Right cardiac atrium (tissue), 5 donors: ENCODE measurements at regions of chr15 and their contacts with region 1.

Region 1: DNA sequence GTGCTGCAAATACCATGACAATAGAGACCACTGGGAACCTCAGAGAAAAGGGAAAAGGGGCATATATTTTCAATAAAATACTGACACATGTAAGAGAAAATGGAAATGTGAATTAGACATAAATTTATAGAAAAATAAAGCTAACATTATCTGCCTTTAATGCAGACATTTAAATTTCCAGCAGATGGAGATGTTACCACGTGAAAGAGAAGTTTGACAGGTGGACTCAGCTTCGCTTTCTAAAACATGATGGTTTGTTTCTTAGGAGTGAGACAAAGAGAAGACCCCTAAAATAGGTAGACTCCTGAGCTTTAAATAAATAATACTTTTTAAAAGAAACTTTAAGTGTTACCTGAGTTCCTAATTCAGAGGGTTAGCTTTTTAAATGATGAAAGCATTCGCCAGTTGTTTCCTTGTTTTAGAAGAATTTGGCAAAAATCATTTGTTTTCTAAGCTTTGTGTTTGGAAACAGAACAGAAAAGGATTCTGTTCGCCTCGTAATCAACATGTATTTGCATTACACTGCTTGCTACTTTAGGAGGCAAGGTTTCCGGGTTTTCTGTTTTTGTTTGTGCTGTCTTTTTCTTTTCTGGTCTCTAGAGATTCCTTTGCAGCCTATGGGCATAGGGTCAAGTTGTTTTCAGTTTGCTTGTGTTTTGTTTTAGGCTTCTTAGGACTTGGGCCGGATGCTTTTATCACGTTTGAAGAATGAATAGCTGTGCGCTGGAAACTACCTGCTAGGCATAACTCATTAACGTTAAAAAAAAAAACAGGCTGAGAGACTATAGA is 271.4 kb downstream of the THSD4 start:
- DNase-seq: no peak
- ATAC-seq: no peak
- H3K4me3 ChIP-seq: no peak overlapping the region
- H3K27ac ChIP-seq: no peak overlapping the region
- H3K4me1 ChIP-seq: no peaks in the 10 kb centered on the region
- H3K27me3 ChIP-seq: no peaks in the 10 kb centered on the region

Region 2: DNA sequence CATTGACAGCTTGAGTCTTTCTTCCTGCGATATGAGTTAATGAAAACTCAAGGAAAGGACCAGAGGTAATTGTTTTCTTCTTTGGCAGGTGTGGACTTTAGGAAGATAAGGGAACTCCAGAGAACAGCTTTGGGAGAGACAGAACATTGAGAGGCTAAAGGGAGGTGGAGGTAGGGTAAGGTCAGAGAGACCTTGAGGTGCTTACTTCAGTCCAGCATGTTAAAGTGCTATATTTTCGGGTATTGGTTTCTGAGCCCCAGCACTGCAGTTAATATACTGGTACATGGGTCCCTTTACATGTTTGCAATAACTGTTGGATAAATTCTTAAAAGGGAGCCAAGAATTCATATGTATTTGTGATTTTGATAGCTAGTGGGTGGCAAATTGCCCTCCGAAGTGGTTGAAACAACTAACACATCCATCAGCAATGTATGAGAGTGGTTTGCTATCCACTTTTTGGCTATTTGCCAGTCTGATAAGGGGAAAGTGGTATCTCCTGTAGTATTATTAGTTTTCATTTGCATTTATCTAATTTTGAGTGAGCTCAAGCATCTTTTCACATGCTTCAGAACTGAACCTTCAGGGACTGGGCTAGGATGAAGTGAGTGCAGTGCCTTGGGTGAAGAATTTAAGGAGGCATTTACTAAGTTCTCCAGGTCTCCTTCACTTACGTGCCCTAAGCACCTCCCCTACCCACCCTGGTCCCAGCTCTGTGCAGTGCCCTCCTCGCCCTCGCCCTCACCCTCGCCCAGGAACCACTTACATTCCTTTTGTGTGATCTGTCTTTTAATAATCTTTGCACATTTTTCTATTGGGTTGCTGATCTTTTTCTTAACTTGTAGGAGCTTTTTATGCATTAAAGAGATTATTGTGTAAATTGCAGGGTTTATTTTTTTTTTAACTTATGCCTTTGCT is 51.0 kb after region 1 on chr15:
- intact Hi-C with region 1: loop called in 2 of 4 experiments (anchors 5 kb)
- DNase-seq: peak in 1 of 3 donors; percentile 31
- ATAC-seq: no peak
- H3K4me3 ChIP-seq: no peak overlapping the region
- H3K27ac ChIP-seq: no peak overlapping the region
- H3K4me1 ChIP-seq: no peaks in the 10 kb centered on the region
- H3K27me3 ChIP-seq: no peaks in the 10 kb centered on the region

Region 3: DNA sequence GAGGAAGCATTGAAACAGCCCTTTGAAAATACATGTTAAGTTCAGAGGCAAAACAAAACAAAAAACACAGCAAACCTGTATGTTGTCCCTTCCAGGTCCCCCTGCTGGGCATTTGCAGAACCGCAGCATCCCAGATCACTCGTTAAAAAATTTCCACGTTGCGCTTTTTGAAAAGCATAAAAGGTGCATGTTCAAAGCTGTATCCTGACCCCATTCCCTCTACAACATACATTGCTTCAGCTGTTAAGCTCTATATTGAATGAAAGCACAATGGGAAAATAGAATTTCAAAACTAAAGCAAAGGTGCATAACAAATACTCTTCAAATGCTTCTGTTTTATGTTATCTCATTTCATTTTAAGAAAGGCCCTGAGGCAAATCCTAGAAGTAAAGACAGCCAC is 56.9 kb after region 1 on chr15:
- intact Hi-C with region 1: loop called in 2 of 4 experiments (anchors 5 kb)
- DNase-seq: peak; percentile 59 to 84 (median 73)
- ATAC-seq: no peak
- H3K4me3 ChIP-seq: no peak overlapping the region
- H3K27ac ChIP-seq: no peak overlapping the region
- H3K4me1 ChIP-seq: no peaks in the 10 kb centered on the region
- H3K27me3 ChIP-seq: no peaks in the 10 kb centered on the region